PC-3 (cell line): ENCODE measurements at regions of chr15 and their contacts with region 1.

Region 1: DNA sequence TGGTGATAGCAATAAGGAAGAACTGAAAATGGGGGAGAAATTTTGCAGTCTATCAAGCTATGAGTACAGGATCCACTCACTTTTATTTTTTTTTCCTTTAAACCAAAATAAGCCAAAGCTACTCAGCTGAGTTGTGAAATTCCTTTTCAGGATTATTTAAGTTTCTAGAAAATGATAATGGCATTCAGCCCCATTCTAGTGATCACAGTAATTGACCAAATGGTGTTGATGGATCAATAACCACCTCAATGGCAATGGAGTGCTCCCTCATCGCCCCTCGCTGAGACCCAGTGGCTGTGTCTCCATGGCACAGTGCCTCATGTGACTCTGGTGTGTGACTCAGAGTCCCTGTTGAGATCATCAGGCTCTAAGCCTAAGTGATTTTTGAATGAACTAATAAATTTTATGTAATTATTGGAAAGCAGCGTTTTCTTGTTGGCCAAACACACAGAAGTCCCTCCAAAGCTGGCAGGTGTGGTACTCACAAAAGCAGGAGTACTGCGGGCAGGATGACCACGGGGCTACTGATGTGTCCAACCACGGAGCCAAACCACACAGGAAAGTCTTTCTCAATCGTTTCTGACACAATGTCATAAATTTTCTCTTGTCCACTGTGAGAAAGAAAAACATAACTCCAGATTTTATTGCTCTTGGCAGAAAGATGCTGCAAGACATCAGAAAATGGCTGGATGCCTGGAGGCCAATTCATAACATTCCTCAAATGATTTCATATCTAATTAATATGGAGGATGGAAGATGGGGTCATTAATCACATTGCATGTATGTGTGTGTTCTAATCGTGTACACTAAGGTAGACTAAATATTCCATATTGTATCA is 14.4 kb upstream of the STARD5 start:
- DNase-seq: peak; percentile 93
- ATAC-seq: peak; percentile 81
- H3K4me3 ChIP-seq: no peak overlapping the region
- H3K27ac ChIP-seq: 0 out of 2 replicates have a peak overlapping the region, but pooled peaks have one; percentile 10
- H3K4me1 ChIP-seq: peaks cover 17% of the 10 kb centered on the region
- H3K27me3 ChIP-seq: no peaks in the 10 kb centered on the region
- CTCF ChIP-seq: no peak

Region 2: DNA sequence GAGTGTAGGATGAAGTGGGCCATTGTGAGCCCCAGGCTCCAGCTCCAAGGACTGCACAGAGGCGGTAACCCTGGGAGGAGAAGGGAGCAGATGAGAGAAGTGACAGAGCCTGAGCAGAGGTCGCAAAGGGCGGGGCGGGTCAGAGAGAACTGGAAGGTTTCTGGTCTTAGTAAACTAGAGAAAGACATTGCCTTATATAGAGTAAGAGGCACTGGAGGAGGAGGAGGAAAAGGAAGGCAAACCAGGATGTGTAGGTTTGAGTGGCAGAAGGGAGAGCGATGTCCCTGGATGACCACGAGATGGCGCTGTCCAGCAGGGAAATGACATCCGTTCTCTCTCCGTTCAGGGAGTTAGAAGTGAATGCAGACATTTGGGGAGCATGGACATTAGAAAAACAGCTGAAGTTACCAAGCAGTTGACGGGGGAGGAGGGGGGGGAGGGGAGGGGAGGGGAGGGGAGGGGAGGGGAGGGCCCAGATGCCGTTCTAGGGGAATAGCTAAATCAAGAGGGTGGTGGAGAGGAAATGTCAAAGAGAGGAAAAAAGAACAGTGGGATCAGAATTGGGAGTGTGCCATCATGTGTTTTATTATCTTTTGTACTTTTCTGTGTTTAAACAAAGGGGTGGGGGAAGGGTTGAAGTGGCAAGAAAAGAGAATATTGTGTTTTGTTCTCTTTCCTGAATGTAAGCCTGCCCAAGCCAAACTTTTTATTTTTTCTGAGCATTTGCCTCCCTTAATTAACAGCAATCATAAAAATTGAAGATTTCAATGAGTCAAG is 63.3 kb before region 1 on chr15:
- CTCF ChIA-PET with region 1: no interaction called
- POLR2A ChIA-PET with region 1: no interaction called
- intact Hi-C with region 1: loop called (anchors 2 kb)
- DNase-seq: peak; percentile 79
- ATAC-seq: peak; percentile 86
- H3K4me3 ChIP-seq: no peak overlapping the region
- H3K27ac ChIP-seq: no peak overlapping the region
- H3K4me1 ChIP-seq: 0 out of 2 replicates have a peak, but pooled peaks cover 7% of the 10 kb centered on the region
- H3K27me3 ChIP-seq: peaks cover 4% of the 10 kb centered on the region
- CTCF ChIP-seq: peak; percentile 76

Region 3: GRCh38 chr15:81292523-81293001 is 45.8 kb before region 1 on chr15:
- CTCF ChIA-PET with region 1: no interaction called
- POLR2A ChIA-PET with region 1: no interaction called
- intact Hi-C with region 1: no loop called
- DNase-seq: no peak
- ATAC-seq: no peak
- H3K4me3 ChIP-seq: no peak overlapping the region
- H3K27ac ChIP-seq: no peak overlapping the region
- H3K4me1 ChIP-seq: peaks cover 10% of the 10 kb centered on the region
- H3K27me3 ChIP-seq: no peaks in the 10 kb centered on the region
- CTCF ChIP-seq: no peak

Region 4: GRCh38 chr15:81323944-81324881 is 14.2 kb before region 1 on chr15 and contains the start of gene STARD5:
- CTCF ChIA-PET with region 1: no interaction called
- POLR2A ChIA-PET with region 1: no interaction called
- intact Hi-C with region 1: loop called (anchors 1 kb)
- DNase-seq: peak; percentile 97
- ATAC-seq: peak; percentile 100
- H3K4me3 ChIP-seq: peak within 1 kb of the TSS; percentile 82
- H3K27ac ChIP-seq: no peak within 1 kb of the TSS
- H3K4me1 ChIP-seq: peaks cover 7% of the 10 kb centered on the region; the same call in 1 of the 2 replicates
- H3K27me3 ChIP-seq: no peaks in the 10 kb centered on the region
- CTCF ChIP-seq: no peak
- total RNA-seq, gene STARD5: 3.3 and 5.9 TPM in 2 replicates

Region 5: DNA sequence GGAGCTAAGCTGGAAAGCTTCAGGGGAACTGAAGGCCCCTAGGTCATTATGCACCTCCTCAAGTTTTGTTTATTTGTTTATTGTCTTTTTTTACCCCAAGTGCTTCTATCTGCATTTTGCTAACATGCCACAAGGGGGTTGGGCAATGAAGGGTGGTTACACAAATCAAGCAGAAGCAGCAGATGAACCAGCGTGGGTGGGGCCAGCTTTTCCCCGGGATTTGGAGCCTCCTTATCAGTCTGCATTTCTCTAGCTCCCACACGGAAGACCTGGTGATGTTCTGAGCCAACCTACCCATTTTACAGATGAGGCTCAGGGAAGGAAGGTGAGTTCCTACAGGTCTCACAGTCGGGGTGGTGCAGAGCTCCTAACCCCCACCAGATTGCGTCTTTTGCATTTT is 18.8 kb after region 1 on chr15:
- CTCF ChIA-PET with region 1: no interaction called
- POLR2A ChIA-PET with region 1: no interaction called
- intact Hi-C with region 1: no loop called
- DNase-seq: no peak
- ATAC-seq: no peak
- H3K4me3 ChIP-seq: no peak overlapping the region
- H3K27ac ChIP-seq: no peak overlapping the region
- H3K4me1 ChIP-seq: no peaks in the 10 kb centered on the region
- H3K27me3 ChIP-seq: peaks cover 19% of the 10 kb centered on the region
- CTCF ChIP-seq: 0 out of 2 replicates have a peak, but pooled peaks have one; percentile 29

Region 6: GRCh38 chr15:81400640-81401236 is 62.3 kb after region 1 on chr15:
- CTCF ChIA-PET with region 1: no interaction called
- POLR2A ChIA-PET with region 1: no interaction called
- intact Hi-C with region 1: loop called (anchors 2 kb)
- DNase-seq: peak; percentile 73
- ATAC-seq: peak; percentile 49
- H3K4me3 ChIP-seq: no peak overlapping the region
- H3K27ac ChIP-seq: no peak overlapping the region
- H3K4me1 ChIP-seq: peaks cover 14% of the 10 kb centered on the region
- H3K27me3 ChIP-seq: peaks cover 7% of the 10 kb centered on the region; the same call in 1 of the 2 replicates
- CTCF ChIP-seq: peak; percentile 85